Transverse colon (tissue), 4 donors: ENCODE measurements at regions of chr1 and their contacts with region 1.

Region 1: GRCh38 chr1:229258031-229258756 is 12.7 kb upstream of the RAB4A start:
- DNase-seq: peak; percentile 68
- H3K4me3 ChIP-seq: no peak overlapping the region
- H3K27ac ChIP-seq: no peak overlapping the region
- H3K4me1 ChIP-seq: peaks cover 0 to 4% (median 1%) of the 10 kb centered on the region in 4 donors
- H3K27me3 ChIP-seq: no peaks in the 10 kb centered on the region
- CTCF ChIP-seq: peak; percentile 73 to 91 (median 85)
- EP300 ChIP-seq: no peak
- POLR2A ChIP-seq: no peak

Region 2: DNA sequence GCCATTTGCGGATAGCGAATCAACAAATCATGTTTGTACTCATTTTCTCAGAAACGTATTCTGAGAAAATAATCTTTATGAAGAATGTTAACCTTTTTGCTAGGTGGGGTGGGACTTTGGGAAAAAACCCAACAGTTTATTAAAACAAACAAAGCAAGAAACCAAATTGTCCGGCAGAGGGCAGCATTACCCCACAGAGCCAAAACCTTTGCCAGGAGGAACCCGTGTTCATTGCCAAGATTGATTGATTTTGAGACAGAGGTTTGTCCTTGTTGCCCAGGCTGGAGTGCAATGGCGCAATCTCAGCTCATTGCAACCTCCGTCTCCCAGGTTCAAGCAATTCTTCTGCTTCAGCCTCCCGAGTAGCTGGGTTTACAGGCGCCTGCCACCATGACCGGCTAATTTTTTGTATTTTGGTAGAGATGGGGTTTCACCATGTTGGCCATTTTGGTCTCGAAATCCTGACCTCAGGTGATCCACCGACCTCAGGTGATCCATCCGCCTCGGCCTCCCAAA is 593.7 kb before region 1 on chr1:
- in situ Hi-C with region 1: no loop called
- intact Hi-C with region 1: loop called (anchors 10 kb)
- DNase-seq: peak; percentile 84
- H3K4me3 ChIP-seq: no peak overlapping the region
- H3K27ac ChIP-seq: no peak overlapping the region
- H3K4me1 ChIP-seq: peaks cover 0 to 5% (median 0%) of the 10 kb centered on the region in 4 donors
- H3K27me3 ChIP-seq: peaks cover 10% of the 10 kb centered on the region
- CTCF ChIP-seq: peak; percentile 84 to 91 (median 85)
- EP300 ChIP-seq: no peak
- POLR2A ChIP-seq: no peak

Region 3: GRCh38 chr1:229186373-229187056 is 71.7 kb before region 1 on chr1:
- in situ Hi-C with region 1: no loop called
- intact Hi-C with region 1: no loop called
- DNase-seq: no peak
- H3K4me3 ChIP-seq: no peak overlapping the region
- H3K27ac ChIP-seq: no peak overlapping the region
- H3K4me1 ChIP-seq: no peaks in the 10 kb centered on the region
- H3K27me3 ChIP-seq: no peaks in the 10 kb centered on the region
- CTCF ChIP-seq: no peak
- EP300 ChIP-seq: no peak
- POLR2A ChIP-seq: no peak